T-cell (primary cell): ENCODE measurements at regions of chr17 and their contacts with region 1.

Region 1: DNA sequence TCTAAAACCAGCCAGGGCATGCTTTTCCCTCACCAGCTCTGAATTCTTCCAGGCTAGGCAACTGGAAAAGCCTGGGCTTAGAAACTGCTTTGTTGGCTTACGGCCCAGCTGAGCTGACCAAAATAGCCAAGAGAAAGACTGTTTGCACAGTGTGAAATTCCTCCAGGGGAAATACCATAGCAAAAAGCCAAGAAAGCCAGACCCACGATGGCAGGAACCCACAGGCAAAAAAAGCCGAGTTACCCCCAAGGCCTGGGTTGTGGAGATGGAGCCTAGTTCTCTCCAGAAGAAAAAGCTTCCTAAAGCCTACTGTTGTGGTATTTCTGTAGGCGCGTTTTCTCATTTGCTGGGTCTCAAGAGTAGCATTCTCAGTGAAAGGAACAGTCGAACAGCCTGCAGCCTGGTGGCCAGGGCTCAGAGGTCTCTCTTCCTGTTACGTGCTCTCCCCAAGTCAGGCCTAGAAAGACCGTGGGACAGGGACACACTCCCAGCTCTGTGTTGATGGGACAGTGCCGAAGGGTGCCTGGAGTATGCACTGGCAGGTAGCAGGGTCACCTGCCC is 9.3 kb downstream of the SP2 start:
- DNase-seq: no peak
- ATAC-seq: no peak
- H3K4me3 ChIP-seq: no peak overlapping the region
- H3K4me3 Mint-ChIP-seq: no peak overlapping the region
- H3K27ac ChIP-seq: no peak overlapping the region
- H3K27ac Mint-ChIP-seq: no peak overlapping the region
- H3K4me1 ChIP-seq: peaks cover 0 to 9% of the 10 kb centered on the region in 2 experiments
- H3K4me1 Mint-ChIP-seq: peaks cover 54 to 55% (median 55%) of the 10 kb centered on the region in 3 donors
- H3K27me3 ChIP-seq: no peaks in the 10 kb centered on the region
- H3K27me3 Mint-ChIP-seq: no peaks in the 10 kb centered on the region

Region 2: GRCh38 chr17:47862621-47863440 is 42.5 kb before region 1 on chr17:
- CTCF ChIA-PET with region 1: no interaction called
- POLR2A ChIA-PET with region 1: no interaction called
- DNase-seq: no peak
- ATAC-seq: no peak
- H3K4me3 ChIP-seq: no peak overlapping the region
- H3K4me3 Mint-ChIP-seq: no peak overlapping the region
- H3K27ac ChIP-seq: no peak overlapping the region
- H3K27ac Mint-ChIP-seq: peak overlapping the region in 1 of 2 donors; percentile 34
- H3K4me1 ChIP-seq: peaks cover 0 to 6% of the 10 kb centered on the region in 2 experiments
- H3K4me1 Mint-ChIP-seq: peaks cover 9 to 17% (median 11%) of the 10 kb centered on the region in 3 donors
- H3K27me3 ChIP-seq: peaks cover 0 to 42% of the 10 kb centered on the region in 2 experiments
- H3K27me3 Mint-ChIP-seq: peaks cover 9 to 16% of the 10 kb centered on the region in 2 donors

Region 3: DNA sequence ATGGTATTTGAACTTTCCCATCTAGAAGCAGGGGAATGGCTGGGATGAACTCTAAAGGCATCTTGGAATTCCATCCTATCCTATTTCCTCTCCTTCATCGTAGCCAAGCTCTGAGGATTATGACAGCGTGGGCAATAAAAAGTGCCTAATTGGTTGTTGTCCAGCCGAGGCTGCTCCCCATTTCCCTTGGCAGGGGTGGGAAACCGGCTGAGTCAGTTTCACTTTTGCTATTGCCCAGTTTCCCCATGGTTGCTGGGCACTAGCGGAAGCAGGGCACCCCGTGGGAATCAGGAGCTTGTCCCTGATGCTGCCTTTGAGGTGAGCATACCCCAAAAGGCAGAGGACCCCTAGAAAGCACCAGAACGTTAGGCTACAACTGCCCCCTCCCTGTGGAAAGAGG is 23.1 kb before region 1 on chr17:
- CTCF ChIA-PET with region 1: interaction called in 1 of 2 experiments, 10 read pairs
- POLR2A ChIA-PET with region 1: no interaction called
- DNase-seq: no peak
- ATAC-seq: no peak
- H3K4me3 ChIP-seq: no peak overlapping the region
- H3K4me3 Mint-ChIP-seq: no peak overlapping the region
- H3K27ac ChIP-seq: no peak overlapping the region
- H3K27ac Mint-ChIP-seq: no peak overlapping the region
- H3K4me1 ChIP-seq: peaks cover 16 to 39% of the 10 kb centered on the region in 2 experiments
- H3K4me1 Mint-ChIP-seq: peaks cover 33 to 41% (median 40%) of the 10 kb centered on the region in 3 donors
- H3K27me3 ChIP-seq: peaks cover 0 to 49% of the 10 kb centered on the region in 2 experiments
- H3K27me3 Mint-ChIP-seq: peaks cover 0 to 11% of the 10 kb centered on the region in 2 donors